Aorta (tissue), 5 donors: ENCODE measurements at regions of chr14 and their contacts with region 1.

Region 1: DNA sequence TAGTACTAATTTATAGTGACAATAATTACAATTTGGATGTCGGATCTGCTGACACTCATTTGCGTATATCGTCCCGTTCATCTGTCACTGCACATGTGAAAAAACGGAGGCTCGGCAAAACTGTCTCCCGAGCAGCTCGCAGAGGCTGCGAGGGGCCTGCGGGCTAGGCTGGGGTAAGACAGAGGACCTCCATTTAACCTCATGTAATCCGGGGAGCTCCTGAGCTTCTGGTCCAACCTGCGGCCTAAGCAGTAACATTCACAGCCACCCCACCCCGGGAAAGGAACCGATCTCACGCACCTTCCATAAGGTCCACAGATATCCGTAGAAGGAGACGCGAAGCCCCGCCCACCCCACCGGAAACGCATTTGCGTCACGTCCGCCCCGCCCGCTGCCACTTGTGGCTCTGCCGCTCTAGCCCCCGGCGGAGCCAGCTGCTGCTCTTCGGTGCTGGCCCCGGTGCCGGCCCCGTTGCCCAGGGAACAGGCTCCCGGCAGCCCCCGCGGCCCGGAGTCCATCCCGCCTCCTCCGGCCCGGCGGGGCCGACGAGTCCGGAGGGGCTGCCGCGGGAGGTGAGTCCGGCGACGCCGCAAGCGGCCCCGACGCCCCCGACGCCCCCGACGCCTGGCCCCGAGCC is at the starts of genes CINP and TECPR2:
- DNase-seq: peak; percentile 98 to 100
- ATAC-seq: peak; percentile 100
- H3K4me3 ChIP-seq: peak within 1 kb of the TSS; percentile 82 to 90
- H3K27ac ChIP-seq: peak within 1 kb of the TSS; percentile 61 to 72
- H3K4me1 ChIP-seq: peaks cover 0 to 6% of the 10 kb centered on the region in 2 donors
- H3K27me3 ChIP-seq: no peaks in the 10 kb centered on the region
- total RNA-seq, gene CINP: 25.9 to 30.8 TPM
- total RNA-seq, gene TECPR2: 32.2 to 32.5 TPM

Region 2: DNA sequence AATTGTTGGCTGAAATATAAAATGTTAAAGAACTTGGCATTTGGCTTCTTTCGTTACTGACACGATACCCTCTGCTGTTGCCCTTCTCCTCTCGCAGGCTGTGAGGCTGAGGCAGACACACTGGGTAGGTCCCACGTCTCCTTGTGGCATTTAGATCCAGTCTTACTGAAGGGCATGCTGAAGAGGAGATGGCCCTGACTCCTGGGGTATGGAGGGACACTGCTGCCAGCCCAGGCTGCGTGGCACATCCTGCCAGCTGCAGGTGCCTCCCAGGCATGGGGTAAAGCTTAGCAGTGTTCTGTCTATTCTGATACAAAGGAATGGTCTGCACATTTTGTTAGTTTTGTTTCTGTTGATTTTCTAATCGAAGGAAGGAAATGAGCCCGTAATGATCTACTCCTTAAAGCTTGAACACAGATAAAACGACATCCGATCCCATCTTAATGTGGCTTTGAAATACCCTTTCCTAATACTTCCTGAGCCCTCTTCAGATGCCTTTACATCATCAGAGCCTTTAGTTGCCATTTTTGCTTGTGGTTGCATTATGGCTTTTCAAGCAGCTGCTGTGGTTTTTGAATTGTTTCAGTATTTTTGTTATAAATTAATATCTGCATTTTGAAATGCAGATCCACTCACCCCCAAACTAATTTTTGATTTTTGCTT is 161.8 kb before region 1 on chr14:
- intact Hi-C with region 1: no loop called
- DNase-seq: no peak
- ATAC-seq: no peak
- H3K4me3 ChIP-seq: no peak overlapping the region
- H3K27ac ChIP-seq: no peak overlapping the region
- H3K4me1 ChIP-seq: no peaks in the 10 kb centered on the region
- H3K27me3 ChIP-seq: no peaks in the 10 kb centered on the region

Region 3: DNA sequence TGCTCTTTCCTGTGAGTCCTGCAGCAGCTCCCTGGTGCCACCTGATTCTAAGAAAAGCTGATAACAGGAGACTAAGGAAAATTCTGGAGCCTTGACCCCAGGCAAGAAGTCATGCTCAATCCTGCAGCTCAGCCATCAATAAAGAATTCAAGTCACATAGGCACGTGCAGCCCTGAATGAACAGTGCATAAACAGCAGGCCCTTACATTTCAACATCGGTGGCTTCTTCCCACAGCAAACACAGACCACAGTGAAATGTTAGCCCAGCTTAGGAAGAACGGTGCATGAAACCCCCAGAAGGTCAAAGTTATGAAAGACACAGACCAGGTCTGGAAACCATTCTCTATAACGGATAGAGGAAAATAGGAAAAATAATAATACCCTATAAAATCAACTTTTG is 10.4 kb before region 1 on chr14:
- intact Hi-C with region 1: loop called in 1 of 2 experiments (anchors 1 kb)
- DNase-seq: no peak
- ATAC-seq: no peak
- H3K4me3 ChIP-seq: no peak overlapping the region
- H3K27ac ChIP-seq: no peak overlapping the region
- H3K4me1 ChIP-seq: no peaks in the 10 kb centered on the region
- H3K27me3 ChIP-seq: no peaks in the 10 kb centered on the region

Region 4: GRCh38 chr14:102509744-102510615 is 147.3 kb after region 1 on chr14 and contains the start of gene ANKRD9:
- intact Hi-C with region 1: loop called in 1 of 2 experiments (anchors 5 kb)
- DNase-seq: peak; percentile 97 to 99
- ATAC-seq: peak; percentile 95
- H3K4me3 ChIP-seq: peak within 1 kb of the TSS; percentile 56 to 58
- H3K27ac ChIP-seq: peak within 1 kb of the TSS in 1 of 2 donors; percentile 7
- H3K4me1 ChIP-seq: no peaks in the 10 kb centered on the region
- H3K27me3 ChIP-seq: no peaks in the 10 kb centered on the region
- total RNA-seq, gene ANKRD9: 13.7 to 15.0 TPM

Region 5: DNA sequence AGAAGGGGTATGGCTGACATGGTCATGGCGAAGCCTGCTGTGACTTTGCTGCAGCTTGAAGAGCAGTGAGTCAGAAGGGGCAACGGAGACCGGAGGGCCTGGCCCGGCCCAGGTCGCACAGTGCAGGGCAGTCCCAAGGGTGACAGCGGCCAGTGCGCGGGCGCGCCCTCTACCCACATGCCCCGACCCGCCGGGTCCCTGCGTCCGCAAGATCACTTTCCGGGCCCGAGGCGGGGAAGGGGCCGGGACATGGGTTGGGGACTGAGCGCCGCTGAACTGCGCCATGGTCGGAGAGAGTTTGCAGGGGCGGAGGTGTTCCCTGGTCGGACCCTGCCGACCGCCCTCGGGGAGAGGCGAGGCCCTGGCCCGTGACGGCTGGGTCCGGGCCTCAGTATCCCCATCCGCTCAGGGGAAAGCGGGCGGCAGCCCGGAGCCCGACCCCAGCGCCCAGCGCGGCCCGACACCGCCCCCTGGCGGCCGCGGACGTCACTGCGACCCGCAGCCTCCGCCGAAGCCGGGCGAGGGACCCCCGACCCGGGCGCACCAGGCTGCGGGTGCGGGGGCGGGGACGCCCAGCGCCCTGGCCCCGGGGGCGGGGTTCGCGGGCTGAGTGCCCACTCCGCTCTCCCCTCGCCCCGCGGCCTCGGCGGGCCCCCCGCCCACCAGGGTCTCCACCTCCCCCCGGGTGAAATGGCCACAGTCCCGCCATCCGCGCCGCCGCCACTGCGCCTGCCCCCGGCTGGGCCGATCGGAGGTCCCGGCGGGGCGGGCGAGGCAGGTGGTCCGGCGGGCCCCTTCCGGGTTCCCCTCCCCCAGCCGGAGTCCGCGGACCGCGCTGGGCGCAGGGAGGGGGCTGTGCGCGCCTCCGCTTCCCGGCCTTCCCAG is 154.1 kb after region 1 on chr14:
- intact Hi-C with region 1: loop called (anchors 2 to 5 kb)
- DNase-seq: peak; percentile 71 to 90
- ATAC-seq: peak; percentile 90
- H3K4me3 ChIP-seq: peak overlapping the region; percentile 27 to 68
- H3K27ac ChIP-seq: no peak overlapping the region
- H3K4me1 ChIP-seq: no peaks in the 10 kb centered on the region
- H3K27me3 ChIP-seq: no peaks in the 10 kb centered on the region